ENCODE measurements at regions of chr2 and their contacts with region 1.

Region 1: DNA sequence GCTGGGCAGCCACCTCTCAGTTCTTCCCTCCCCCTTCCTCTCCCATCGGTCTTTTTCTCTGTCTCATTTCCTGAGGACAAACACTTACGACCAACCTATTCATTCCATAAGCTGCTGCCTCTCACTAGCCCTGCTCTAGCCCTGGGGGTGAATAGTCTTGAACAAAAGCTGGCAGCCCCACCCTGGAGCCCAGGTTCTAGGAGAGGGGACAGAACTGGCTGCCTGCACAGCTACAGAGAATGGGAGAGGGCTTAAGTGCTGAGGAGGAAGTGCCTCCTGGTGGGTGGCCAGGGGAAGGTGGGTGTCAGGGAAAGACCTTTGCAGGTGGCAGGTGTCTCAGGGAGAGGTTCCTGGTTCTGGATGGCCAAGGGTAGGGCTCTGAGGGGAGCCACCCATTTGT is 22.8 kb downstream of the ANO7 start:
- DNase-seq: peak in 1 of 2 experiments; percentile 46
- H3K4me3 ChIP-seq: no peak overlapping the region
- H3K4me3 Mint-ChIP-seq: no peak overlapping the region
- H3K27ac Mint-ChIP-seq: no peak overlapping the region
- H3K4me1 ChIP-seq: no peaks in the 10 kb centered on the region
- H3K4me1 Mint-ChIP-seq: no peaks in the 10 kb centered on the region
- H3K27me3 ChIP-seq: no peaks in the 10 kb centered on the region
- H3K27me3 Mint-ChIP-seq: no peaks in the 10 kb centered on the region
- CTCF ChIP-seq: peak in 1 of 2 experiments; percentile 38

Region 2: DNA sequence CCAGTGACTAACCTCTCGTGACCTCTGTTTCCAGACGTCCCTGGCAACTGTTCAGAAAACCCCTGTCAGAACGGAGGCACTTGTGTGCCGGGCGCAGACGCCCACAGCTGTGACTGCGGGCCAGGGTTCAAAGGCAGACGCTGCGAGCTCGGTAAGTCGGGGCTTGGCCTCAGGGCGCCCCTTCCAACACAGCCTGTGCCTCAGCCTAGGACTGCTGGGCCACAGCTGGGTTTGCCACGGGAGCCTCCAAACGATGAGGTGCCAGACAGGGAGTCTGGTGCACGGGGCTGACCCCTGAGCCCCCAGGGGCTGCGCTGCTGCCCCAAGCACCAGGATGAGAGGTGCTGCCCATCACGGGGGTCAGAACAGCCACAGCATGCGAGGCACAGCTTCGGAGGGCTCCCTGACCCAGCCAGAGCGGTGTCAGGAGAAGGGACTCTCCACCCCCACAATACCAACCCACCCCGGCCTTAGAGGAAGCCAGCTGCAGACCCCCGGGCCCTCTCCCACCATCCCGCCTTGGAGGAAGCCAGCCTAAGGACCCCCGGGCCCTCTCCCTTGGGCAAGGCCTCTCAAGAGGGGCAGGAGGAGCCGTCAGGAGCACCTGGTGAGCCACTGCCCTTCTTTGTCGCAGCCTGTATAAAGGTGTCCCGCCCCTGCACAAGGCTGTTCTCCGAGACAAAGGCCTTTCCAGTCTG is 129.5 kb before region 1 on chr2:
- CTCF ChIA-PET with region 1: no interaction called
- POLR2A ChIA-PET with region 1: no interaction called
- intact Hi-C with region 1: loop called (anchors 2 kb)
- DNase-seq: no peak
- H3K4me3 ChIP-seq: no peak overlapping the region
- H3K4me3 Mint-ChIP-seq: no peak overlapping the region
- H3K27ac Mint-ChIP-seq: no peak overlapping the region
- H3K4me1 ChIP-seq: no peaks in the 10 kb centered on the region
- H3K4me1 Mint-ChIP-seq: no peaks in the 10 kb centered on the region
- H3K27me3 ChIP-seq: no peaks in the 10 kb centered on the region
- H3K27me3 Mint-ChIP-seq: no peaks in the 10 kb centered on the region
- CTCF ChIP-seq: no peak

Region 3: DNA sequence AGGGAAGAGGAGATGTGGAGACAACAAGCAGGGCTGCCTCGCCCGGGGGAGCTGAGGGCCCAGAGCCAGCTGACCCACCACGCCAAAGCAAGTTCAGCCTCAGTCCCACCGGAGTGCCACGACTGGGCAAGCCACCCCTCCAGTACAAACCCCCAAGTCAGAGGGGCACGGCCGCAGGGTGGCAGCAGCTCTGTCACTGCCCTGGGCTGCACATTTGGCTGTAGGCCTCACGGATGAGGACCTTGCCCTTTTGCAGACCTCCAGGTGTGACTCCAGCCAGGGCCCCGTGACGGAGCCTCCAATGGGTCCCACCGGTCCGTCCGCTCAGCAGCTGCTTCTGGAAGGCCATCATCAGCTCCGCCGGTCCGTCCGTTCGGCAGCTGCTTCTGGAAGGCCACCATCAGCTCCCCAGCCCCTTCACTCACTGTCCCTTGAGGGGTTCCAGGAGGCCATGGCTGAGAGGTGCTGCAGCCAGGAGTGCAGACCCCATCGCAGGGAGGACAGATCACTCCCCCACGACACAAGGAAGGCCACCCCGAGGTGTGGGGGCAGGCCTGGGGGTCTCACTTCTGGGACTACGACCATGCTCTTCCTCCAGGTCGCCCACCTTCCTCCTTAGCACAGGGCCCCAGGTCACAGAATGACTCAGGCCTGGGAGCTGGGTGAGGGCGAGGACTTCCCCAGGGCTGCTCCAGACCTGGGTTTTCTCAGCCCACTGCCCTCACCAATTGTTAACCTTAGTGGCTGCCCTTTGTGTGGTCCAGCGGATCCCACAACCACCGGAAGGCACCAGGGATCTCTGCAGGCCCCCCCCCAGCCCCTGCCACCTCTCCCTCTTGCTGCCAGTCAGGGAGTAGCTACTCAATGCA is 321.7 kb after region 1 on chr2:
- CTCF ChIA-PET with region 1: no interaction called
- POLR2A ChIA-PET with region 1: no interaction called
- intact Hi-C with region 1: no loop called
- DNase-seq: no peak
- H3K4me3 ChIP-seq: no peak overlapping the region
- H3K4me3 Mint-ChIP-seq: no peak overlapping the region
- H3K27ac Mint-ChIP-seq: no peak overlapping the region
- H3K4me1 ChIP-seq: no peaks in the 10 kb centered on the region
- H3K4me1 Mint-ChIP-seq: no peaks in the 10 kb centered on the region
- H3K27me3 ChIP-seq: no peaks in the 10 kb centered on the region
- H3K27me3 Mint-ChIP-seq: no peaks in the 10 kb centered on the region
- CTCF ChIP-seq: no peak

Measured in Caco-2 (cell line).